ENCODE measurements at regions of chr13 and their contacts with region 1.

Region 1: DNA sequence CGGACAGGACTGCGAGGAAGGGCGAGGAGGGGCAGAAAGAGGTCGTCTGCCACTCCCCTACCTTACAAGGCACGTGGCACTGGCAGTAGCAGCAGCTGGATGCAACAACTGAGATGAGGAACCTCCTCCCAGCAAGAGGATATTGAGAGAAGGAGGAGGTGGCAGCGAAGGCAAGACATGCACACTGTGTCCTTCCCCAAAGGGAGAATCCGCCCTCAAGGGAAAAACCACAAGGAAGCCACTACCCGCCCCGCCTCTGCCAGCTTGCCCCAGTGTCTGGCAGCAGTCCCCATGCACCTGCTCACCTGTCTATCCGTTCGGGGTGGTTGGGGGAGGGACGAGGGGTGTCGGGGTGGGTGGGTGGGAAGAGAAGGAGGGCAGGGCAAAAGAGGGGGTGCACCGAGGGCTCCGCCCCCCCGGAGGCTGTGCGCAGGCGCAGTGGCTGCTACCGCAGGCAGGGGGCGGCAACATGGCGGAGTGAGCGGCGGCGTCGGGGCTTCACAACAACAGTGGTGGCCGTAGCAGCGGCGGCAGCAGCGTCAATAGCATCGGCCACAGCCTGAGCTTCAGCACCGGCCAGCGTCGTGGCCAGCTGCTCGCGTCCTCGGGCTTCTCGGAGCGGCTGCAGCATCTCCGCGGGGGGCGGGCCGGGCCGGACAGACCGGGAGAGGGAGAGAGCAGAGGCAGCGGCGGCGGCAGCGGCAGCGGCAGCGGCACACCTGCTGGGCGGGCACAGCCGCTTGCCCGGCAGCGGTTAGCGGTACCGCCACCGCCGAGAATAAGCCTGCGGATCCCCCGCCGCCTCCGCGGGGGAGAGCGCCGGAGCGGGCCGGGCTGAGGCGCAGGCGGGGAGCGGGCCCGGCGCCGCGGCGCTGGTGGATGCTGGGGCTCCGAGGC is at the start of gene NBEA:
- DNase-seq: peak; percentile 84
- ATAC-seq: peak; percentile 83
- total RNA-seq, gene NBEA: 17.2 TPM

Region 2: GRCh38 chr13:34657716-34658115 is 284.4 kb before region 1 on chr13:
- intact Hi-C with region 1: loop called (anchors 10 kb)
- DNase-seq: no peak
- ATAC-seq: no peak

Region 3: DNA sequence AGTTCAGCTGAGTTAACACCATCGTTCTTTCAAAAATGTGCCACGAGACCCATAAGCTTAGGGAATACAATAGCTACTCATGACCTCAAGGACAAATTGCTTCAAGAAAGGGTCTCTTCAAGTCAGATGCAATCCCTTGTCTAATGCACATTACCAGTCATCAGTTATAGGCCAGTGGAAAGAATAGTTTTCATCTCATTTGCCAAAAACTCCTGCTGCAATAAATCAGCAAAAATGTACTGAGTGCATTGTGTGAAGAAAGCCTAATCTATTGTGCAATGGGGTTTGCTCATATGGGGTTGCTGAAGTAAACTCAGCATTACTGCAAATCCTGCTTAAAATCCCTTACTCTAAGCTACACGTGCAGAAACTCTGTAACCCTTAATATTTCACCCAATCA is 208.3 kb before region 1 on chr13:
- intact Hi-C with region 1: loop called (anchors 10 kb)
- DNase-seq: no peak
- ATAC-seq: peak; percentile 59

Region 4: GRCh38 chr13:34900288-34900739 is 41.8 kb before region 1 on chr13:
- intact Hi-C with region 1: no loop called
- DNase-seq: no peak
- ATAC-seq: no peak

Region 5: DNA sequence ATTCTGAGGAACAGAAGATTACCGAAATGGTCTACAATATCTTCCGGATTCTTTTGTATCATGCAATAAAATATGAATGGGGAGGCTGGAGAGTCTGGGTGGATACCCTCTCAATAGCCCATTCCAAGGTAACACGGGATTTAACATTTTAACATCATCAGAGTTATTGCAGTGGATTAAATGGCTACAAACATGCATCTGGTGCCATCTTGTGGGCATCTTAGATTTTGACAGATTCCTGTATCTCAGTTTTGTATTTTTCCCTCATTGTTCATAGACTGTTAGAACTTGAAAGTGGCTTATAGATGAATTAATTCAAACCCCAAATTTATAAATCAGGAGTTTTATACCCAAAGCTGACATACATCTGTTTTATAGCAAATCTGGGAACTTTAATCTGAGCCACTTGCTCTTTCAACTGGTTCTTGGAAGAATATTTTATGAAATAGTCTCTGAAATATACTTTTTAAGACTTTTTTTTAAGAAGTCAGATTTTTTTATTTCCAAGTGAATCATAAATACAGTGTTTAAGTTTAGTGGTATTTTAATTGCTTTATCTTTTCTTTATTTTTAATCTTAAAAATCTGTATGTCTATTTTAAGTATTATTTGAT is 215.2 kb after region 1 on chr13:
- intact Hi-C with region 1: loop called (anchors 10 kb)
- DNase-seq: no peak
- ATAC-seq: no peak

Measured in Right ventricle myocardium inferior (tissue), 1 donor.